Motor neuron (in vitro differentiated cells): ENCODE measurements at regions of chr2 and their contacts with region 1.

Region 1: DNA sequence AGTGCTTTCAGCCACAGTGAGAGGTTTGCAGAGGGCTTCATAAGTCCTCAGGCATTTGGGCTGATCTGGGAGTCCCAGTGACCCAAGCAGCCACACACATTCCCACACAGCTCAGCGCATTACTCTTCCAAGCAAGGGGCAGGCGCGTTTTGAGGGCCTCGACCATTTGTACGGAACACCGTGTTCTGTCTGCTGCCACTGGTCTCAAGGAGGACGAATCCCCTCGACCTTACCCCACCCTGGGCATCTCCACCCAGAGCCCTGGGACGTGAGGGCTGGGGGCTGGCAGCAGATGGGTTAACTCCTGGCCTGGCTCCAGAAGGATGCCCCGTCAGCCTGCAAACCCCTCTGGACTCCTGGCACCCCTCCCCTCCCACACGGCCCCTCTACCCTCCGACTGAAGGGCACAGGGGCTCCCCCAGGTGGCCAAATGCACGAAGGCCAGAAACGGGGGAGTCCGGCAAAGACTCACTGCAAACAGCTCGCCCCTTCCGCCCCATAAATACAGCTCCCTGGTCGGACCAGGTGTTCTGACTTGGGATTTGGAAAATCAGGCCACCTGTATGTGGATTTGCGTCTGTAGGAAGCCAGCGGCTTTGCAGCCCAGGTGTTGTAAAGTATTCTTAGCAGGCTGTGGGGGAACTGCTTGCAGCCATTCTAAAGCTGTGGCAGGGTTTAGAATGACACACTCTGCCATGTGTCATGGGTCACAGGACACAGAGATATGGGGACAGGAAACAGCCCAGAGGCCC is 33.6 kb upstream of the PTMA start:
- ATAC-seq: peak; percentile 24 to 72 (median 62)
- H3K4me3 ChIP-seq: no peak overlapping the region
- H3K27ac ChIP-seq: no peak overlapping the region
- H3K4me1 ChIP-seq: peaks cover 31 to 32% of the 10 kb centered on the region in 2 donors

Region 2: GRCh38 chr2:231612179-231613053 is 62.3 kb before region 1 on chr2:
- in situ Hi-C with region 1: loop called in 1 of 9 experiments (anchors 10 kb)
- ATAC-seq: peak in 5 of 8 experiments; percentile 5 to 63 (median 39)
- H3K4me3 ChIP-seq: no peak overlapping the region
- H3K27ac ChIP-seq: peak overlapping the region; percentile 88 to 97
- H3K4me1 ChIP-seq: peaks cover 28 to 33% of the 10 kb centered on the region in 2 donors

Region 3: GRCh38 chr2:231925303-231926179 is 250.8 kb after region 1 on chr2:
- in situ Hi-C with region 1: no loop called
- ATAC-seq: peak; percentile 48 to 90 (median 54)
- H3K4me3 ChIP-seq: peak overlapping the region; percentile 51 to 68 (median 53)
- H3K27ac ChIP-seq: peak overlapping the region in 1 of 2 donors; percentile 3
- H3K4me1 ChIP-seq: peaks cover 4 to 5% of the 10 kb centered on the region in 2 donors